ENCODE measurements at regions of chr7 and their contacts with region 1.

Region 1: DNA sequence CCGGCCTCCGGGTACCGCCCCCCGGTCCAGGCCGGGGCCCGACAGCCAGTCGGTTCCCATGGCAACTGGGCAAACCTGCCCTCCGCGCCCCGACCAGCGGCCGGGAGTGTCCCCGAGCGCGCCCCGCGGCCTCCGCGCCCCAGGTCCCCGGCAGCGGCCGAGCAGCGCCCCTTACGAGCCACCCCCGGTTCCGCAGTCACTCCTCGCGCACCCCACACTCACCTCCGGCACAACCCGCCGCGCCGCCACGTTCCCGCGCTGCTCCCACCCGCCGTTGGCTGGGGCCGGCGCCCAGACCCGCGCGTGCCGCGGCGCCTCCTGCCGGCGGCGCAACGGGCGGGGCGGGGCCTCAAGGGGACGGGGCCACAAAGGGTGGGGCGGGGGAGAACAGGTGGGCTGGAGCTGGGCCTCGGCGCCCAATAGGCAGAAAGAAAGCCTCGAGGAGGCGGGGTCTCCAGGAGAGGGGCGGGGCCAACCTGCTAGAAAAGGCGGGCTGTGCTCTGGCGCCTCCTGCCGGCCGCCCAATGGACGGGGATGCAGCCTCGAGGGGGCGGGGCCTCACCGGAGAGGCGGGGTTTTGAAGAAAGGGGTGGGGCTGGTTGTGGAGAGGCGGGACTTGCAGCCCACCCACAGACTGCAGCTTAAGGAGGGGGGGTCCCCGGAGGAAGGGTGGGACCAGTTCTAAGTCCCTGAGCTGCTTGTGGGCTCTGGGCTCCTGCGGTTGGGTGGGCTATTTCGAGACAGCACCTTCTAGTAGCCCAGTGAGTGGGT is at the start of gene RADIL:
- DNase-seq: peak; percentile 92
- ATAC-seq: peak; percentile 97
- H3K4me3 Mint-ChIP-seq: peak within 1 kb of the TSS; percentile 7
- H3K27ac Mint-ChIP-seq: no peak within 1 kb of the TSS
- H3K4me1 Mint-ChIP-seq: peaks cover 8% of the 10 kb centered on the region
- H3K27me3 Mint-ChIP-seq: peaks cover 35% of the 10 kb centered on the region
- total RNA-seq, gene RADIL: 0.12 TPM in 1 of 2 experiments, not detected in the other

Region 2: GRCh38 chr7:4797858-4798705 is 85.5 kb before region 1 on chr7:
- CTCF ChIA-PET with region 1: interaction called, 27 read pairs
- DNase-seq: peak; percentile 65
- ATAC-seq: peak; percentile 89
- H3K4me3 Mint-ChIP-seq: no peak overlapping the region
- H3K27ac Mint-ChIP-seq: no peak overlapping the region
- H3K4me1 Mint-ChIP-seq: peaks cover 2% of the 10 kb centered on the region
- H3K27me3 Mint-ChIP-seq: no peaks in the 10 kb centered on the region

Region 3: DNA sequence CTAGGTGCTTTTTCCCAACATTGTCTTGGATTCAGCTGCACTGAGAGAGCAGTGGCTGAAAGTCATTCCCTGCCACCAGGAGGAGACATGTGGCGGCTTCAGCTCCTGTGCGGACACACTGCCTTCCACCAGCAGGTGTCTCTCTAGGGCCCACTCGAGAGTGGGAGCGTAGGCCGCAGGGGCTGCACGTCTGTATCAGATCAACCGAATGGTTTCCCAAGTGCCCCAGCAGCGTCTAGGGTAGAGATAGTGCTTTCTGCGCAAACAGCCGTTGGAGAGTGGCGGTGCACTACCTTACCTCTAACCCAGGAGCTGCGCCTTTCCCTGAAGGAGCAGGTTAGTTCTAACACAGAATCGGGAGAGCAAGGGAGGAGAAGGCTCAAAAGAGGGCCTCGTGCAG is 53.4 kb before region 1 on chr7:
- CTCF ChIA-PET with region 1: interaction called, 10 read pairs
- DNase-seq: peak; percentile 67
- ATAC-seq: peak; percentile 71
- H3K4me3 Mint-ChIP-seq: no peak overlapping the region
- H3K27ac Mint-ChIP-seq: no peak overlapping the region
- H3K4me1 Mint-ChIP-seq: no peaks in the 10 kb centered on the region
- H3K27me3 Mint-ChIP-seq: no peaks in the 10 kb centered on the region

Region 4: GRCh38 chr7:4849369-4849768 is 34.2 kb before region 1 on chr7:
- CTCF ChIA-PET with region 1: interaction called, 14 read pairs
- DNase-seq: peak; percentile 50
- ATAC-seq: peak; percentile 60
- H3K4me3 Mint-ChIP-seq: no peak overlapping the region
- H3K27ac Mint-ChIP-seq: no peak overlapping the region
- H3K4me1 Mint-ChIP-seq: peaks cover 8% of the 10 kb centered on the region
- H3K27me3 Mint-ChIP-seq: peaks cover 14% of the 10 kb centered on the region

Measured in activated CD8-positive, alpha-beta memory T cell treated with anti-CD3 and anti-CD28 coated beads, Interleukin-2, amount 10 ng/mL, durations not matched to agents 7 days and 5 days (primary cell).